ENCODE measurements at regions of chr1 and their contacts with region 1.

Region 1: GRCh38 chr1:193417945-193418744 is 231.7 kb upstream of the B3GALT2 start:
- DNase-seq: no peak
- H3K4me3 ChIP-seq: peak overlapping the region in 3 of 4 donors; percentile 21 to 53 (median 24)
- H3K27ac ChIP-seq: peak overlapping the region in 2 of 4 donors; percentile 42 to 43
- H3K4me1 ChIP-seq: peaks cover 0 to 17% (median 4%) of the 10 kb centered on the region in 3 donors
- H3K27me3 ChIP-seq: no peaks in the 10 kb centered on the region
- CTCF ChIP-seq: no peak
- POLR2A ChIP-seq: no peak

Region 2: GRCh38 chr1:193059268-193060225 is 358.6 kb before region 1 on chr1 and contains the starts of genes RO60 and UCHL5:
- intact Hi-C with region 1: no loop called
- DNase-seq: peak; percentile 86
- H3K4me3 ChIP-seq: peak within 1 kb of the TSS; percentile 72 to 91 (median 76)
- H3K27ac ChIP-seq: peak within 1 kb of the TSS; percentile 94 to 99 (median 97)
- H3K4me1 ChIP-seq: peaks cover 4 to 58% (median 22%) of the 10 kb centered on the region in 3 donors
- H3K27me3 ChIP-seq: no peaks in the 10 kb centered on the region
- CTCF ChIP-seq: peak in 1 of 6 experiments; percentile 35
- POLR2A ChIP-seq: peak in 3 of 4 donors; percentile 41 to 82 (median 48)
- total RNA-seq, gene RO60: 29.2 to 91.0 (median 41.7) TPM
- total RNA-seq, gene UCHL5: 27.1 to 51.4 (median 37.6) TPM

Region 3: DNA sequence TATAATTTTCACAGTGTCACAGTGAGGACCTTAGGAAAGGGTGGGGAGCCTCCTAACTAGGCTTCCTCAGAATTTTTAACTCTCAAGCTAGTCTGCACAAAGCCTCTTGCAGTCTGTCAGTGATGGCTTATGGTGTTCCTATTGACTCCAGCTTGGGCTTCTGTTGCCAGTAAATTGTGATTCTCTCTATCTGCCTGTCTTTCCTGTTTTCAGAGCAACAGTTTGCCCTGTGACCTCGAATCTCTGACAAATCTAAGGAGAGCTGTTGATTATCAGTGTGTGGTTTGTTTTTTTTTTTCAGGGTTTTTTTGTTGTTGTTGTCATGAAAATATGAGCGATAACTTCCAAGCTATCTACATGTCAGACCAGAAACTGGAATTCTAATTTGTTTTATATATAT is 191.4 kb after region 1 on chr1:
- intact Hi-C with region 1: loop called (anchors 10 kb)
- DNase-seq: no peak
- H3K4me3 ChIP-seq: no peak overlapping the region
- H3K27ac ChIP-seq: no peak overlapping the region
- H3K4me1 ChIP-seq: no peaks in the 10 kb centered on the region
- H3K27me3 ChIP-seq: no peaks in the 10 kb centered on the region
- CTCF ChIP-seq: no peak
- POLR2A ChIP-seq: no peak

Measured in esophagus squamous epithelium (tissue), 5 donors.